ENCODE measurements at regions of chr10 and their contacts with region 1.

Region 1: GRCh38 chr10:62183442-62183841 is 85.2 kb downstream of the RTKN2 start:
- DNase-seq: peak; percentile 52
- H3K4me3 Mint-ChIP-seq: no peak overlapping the region
- H3K27ac Mint-ChIP-seq: peak overlapping the region; percentile 96
- H3K4me1 Mint-ChIP-seq: peaks cover 76% of the 10 kb centered on the region
- H3K27me3 Mint-ChIP-seq: no peaks in the 10 kb centered on the region

Region 2: GRCh38 chr10:61882621-61883373 is 300.6 kb before region 1 on chr10:
- intact Hi-C with region 1: loop called (anchors 1 kb)
- DNase-seq: no peak
- H3K4me3 Mint-ChIP-seq: no peak overlapping the region
- H3K27ac Mint-ChIP-seq: peak overlapping the region; percentile 81
- H3K4me1 Mint-ChIP-seq: peaks cover 16% of the 10 kb centered on the region
- H3K27me3 Mint-ChIP-seq: peaks cover 5% of the 10 kb centered on the region

Region 3: DNA sequence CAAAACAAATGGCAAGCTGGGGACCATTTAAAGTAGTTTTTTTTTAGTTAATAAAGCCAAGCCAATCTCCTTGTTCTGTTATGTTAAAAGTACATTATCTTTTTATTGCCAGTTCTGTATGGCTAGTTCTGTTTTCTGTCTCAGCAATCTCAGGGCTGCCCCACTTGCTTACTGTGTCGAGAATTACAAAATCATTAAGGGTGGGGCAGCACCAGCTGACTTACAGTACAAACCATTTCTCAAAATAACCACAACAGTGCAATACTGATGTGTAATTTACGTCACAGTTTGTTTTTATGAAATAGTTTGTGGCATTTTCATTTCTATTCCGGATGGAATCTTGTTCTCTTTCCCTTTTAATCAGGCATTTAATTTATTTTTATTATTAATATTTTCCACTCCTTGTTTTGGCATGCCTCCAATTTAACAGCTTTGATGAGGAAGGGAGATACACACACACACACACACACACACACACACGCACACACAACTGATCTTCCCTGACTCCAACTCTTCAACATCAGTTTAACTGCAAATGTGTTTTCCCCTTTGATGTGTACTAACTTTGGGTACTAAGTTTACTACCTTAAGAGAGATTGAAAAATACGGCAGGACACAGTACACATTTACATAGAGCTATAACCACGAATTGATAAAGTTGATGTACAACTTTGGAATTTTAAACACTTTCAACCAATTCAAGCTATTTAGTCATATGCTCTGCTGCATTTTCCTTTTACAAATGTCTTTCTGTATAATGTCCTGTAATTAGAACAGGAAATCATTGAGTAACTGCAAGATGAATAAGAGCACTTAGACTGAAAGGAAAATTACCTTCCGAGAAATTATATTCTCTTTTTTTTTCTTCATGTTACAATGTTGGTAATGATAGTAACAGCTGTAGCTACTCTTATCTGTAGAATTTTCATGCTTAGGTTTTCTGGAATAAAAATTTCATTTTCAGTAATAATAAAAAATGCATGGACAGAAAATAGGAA is 190.5 kb before region 1 on chr10:
- intact Hi-C with region 1: loop called (anchors 1 kb)
- DNase-seq: peak; percentile 49
- H3K4me3 Mint-ChIP-seq: peak overlapping the region; percentile 73
- H3K27ac Mint-ChIP-seq: peak overlapping the region; percentile 88
- H3K4me1 Mint-ChIP-seq: peaks cover 68% of the 10 kb centered on the region
- H3K27me3 Mint-ChIP-seq: no peaks in the 10 kb centered on the region

Region 4: DNA sequence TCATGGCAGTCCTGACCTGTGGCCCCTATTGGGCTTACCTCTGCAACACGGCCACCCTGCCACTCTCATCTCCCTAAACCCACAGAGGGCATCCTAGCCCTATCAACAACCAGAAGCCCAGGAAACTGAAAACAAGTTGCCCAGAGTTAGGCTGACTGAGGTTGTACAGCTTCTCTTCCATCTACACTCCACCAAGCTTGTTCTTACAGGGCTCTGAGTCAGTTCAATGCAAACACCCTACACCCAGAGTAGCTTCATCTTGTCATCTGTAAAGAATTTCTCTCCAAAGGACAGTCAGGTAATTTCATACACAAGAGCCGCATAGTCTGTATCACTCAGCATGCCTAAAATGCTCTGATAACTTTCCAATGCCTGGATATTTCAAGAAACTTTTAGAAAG is 106.6 kb before region 1 on chr10:
- intact Hi-C with region 1: no loop called
- DNase-seq: no peak
- H3K4me3 Mint-ChIP-seq: no peak overlapping the region
- H3K27ac Mint-ChIP-seq: peak overlapping the region; percentile 38
- H3K4me1 Mint-ChIP-seq: peaks cover 66% of the 10 kb centered on the region
- H3K27me3 Mint-ChIP-seq: no peaks in the 10 kb centered on the region

Region 5: DNA sequence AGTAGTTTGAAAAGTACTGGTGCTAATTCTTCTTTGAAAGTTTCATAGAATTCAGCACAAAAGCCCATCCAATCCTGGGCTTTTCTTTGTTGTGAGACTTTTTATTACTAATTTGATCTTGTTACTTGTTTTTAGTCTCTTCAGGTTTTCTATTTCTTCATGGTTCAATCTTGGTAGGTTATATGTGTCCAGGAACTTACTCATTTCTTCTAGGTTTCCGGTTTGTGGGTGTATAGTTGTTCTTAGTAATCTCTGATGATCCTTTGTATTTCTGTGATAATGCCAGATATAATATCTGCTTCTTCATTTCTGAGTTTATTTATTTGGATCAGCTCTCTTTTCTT is 62.3 kb before region 1 on chr10:
- intact Hi-C with region 1: loop called (anchors 1 kb)
- DNase-seq: no peak
- H3K4me3 Mint-ChIP-seq: no peak overlapping the region
- H3K27ac Mint-ChIP-seq: peak overlapping the region; percentile 66
- H3K4me1 Mint-ChIP-seq: peaks cover 27% of the 10 kb centered on the region
- H3K27me3 Mint-ChIP-seq: no peaks in the 10 kb centered on the region

Region 6: GRCh38 chr10:62153191-62153590 is 30.3 kb before region 1 on chr10:
- intact Hi-C with region 1: no loop called
- DNase-seq: no peak
- H3K4me3 Mint-ChIP-seq: no peak overlapping the region
- H3K27ac Mint-ChIP-seq: no peak overlapping the region
- H3K4me1 Mint-ChIP-seq: peaks cover 1% of the 10 kb centered on the region
- H3K27me3 Mint-ChIP-seq: no peaks in the 10 kb centered on the region

Region 7: DNA sequence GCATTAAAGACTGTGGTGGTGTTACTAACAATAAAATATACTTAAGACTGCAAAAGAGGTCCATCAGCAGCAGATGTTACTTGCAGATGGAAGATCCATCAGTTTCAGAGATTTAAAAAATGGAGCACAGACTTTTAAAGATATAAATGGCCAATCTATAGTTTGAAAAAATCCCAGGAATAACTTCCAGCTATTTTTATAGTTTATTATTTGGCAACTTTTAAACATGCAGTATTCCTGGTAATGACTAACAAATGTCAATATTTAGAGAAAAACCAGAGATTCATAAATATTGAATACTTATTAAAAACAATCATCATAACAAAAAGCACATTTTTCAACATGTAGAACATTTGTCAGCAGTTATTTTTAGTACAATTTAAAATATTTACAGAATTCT is 54.5 kb after region 1 on chr10:
- intact Hi-C with region 1: no loop called
- DNase-seq: no peak
- H3K4me3 Mint-ChIP-seq: no peak overlapping the region
- H3K27ac Mint-ChIP-seq: no peak overlapping the region
- H3K4me1 Mint-ChIP-seq: peaks cover 33% of the 10 kb centered on the region
- H3K27me3 Mint-ChIP-seq: no peaks in the 10 kb centered on the region

Region 8: DNA sequence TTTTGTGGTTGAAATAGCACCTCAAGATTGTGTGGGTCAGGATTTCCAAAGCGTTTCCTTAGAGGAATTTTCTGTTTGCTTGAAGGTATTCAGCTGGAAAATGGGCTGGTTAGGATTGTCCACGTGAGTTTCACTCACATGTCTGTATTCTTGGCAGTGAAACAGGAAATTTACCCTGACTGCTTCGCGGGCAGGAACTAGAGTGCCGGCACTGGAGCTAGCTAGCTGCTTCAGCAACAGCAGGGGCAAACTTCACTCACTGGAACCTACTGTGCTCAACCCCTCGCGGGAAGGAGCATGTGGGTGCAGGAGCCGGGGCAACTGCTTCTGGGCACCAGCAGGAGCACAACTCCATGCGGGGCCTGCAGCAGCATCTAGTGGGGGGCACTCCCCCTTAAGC is 123.2 kb after region 1 on chr10:
- intact Hi-C with region 1: no loop called
- DNase-seq: no peak
- H3K4me3 Mint-ChIP-seq: no peak overlapping the region
- H3K27ac Mint-ChIP-seq: no peak overlapping the region
- H3K4me1 Mint-ChIP-seq: peaks cover 2% of the 10 kb centered on the region
- H3K27me3 Mint-ChIP-seq: peaks cover 4% of the 10 kb centered on the region

Region 9: DNA sequence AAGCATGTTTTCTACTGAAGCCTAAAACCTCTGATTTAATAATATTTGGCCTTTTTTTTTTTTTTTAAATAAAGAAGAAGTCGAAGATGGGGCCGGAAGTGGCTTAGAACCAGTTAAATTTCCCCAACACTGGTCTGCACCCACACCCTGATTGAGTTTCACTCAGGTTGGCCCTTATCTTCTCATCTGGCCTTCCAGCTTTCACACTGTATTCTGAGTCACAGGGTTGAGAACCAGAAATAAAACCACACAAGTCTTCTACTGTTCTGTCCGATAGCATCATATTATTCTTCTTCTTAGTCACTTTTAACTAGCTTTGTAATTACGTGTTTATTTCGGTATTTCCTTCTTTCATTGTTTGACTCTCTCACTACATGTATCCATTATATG is 200.6 kb after region 1 on chr10:
- intact Hi-C with region 1: loop called (anchors 1 kb)
- DNase-seq: peak; percentile 55
- H3K4me3 Mint-ChIP-seq: no peak overlapping the region
- H3K27ac Mint-ChIP-seq: peak overlapping the region; percentile 60
- H3K4me1 Mint-ChIP-seq: peaks cover 27% of the 10 kb centered on the region
- H3K27me3 Mint-ChIP-seq: peaks cover 54% of the 10 kb centered on the region

Region 10: DNA sequence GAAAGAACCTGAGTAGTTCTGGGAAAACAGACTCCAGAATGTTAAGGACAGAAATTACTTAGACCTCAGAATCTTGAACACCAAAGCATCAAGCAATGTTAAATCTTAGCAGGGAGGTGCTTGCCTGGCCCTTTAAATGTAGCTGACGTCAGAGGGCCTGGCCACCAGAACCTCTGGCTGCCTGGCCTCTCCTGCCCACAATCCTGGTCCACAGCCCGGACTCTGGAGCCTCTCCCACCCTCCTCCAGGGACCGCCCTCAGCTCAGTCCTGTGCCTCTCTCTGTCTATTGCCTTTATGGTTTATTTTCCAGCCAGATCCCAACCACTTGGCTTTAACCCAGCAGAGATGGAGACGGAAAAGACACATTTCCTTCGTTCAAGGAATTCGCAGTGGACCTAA is 674.9 kb after region 1 on chr10:
- intact Hi-C with region 1: loop called (anchors 2 kb)
- DNase-seq: no peak
- H3K4me3 Mint-ChIP-seq: no peak overlapping the region
- H3K27ac Mint-ChIP-seq: no peak overlapping the region
- H3K4me1 Mint-ChIP-seq: peaks cover 78% of the 10 kb centered on the region
- H3K27me3 Mint-ChIP-seq: no peaks in the 10 kb centered on the region